Aorta (tissue), 5 donors: ENCODE measurements at regions of chr20 and their contacts with region 1.

Region 1: DNA sequence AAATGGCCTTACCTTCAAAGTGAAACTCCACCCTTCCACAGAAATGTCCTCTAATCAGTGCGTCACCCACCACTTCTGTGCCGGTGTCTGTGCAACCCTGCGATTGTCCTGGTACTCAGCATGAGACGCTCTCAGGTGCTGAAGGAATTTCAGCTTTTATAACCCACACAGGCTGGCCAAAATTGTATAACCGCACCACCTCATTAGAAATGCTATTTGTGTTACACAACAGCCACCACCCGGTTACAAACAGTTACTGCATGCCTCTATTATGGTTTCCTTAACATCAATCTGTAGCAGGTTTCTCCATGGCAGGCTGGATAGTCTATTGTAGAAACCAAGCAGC is 51.5 kb downstream of the SLC23A2 start:
- DNase-seq: no peak
- ATAC-seq: peak; percentile 76
- H3K4me3 ChIP-seq: no peak overlapping the region
- H3K27ac ChIP-seq: no peak overlapping the region
- H3K4me1 ChIP-seq: no peaks in the 10 kb centered on the region
- H3K27me3 ChIP-seq: no peaks in the 10 kb centered on the region

Region 2: DNA sequence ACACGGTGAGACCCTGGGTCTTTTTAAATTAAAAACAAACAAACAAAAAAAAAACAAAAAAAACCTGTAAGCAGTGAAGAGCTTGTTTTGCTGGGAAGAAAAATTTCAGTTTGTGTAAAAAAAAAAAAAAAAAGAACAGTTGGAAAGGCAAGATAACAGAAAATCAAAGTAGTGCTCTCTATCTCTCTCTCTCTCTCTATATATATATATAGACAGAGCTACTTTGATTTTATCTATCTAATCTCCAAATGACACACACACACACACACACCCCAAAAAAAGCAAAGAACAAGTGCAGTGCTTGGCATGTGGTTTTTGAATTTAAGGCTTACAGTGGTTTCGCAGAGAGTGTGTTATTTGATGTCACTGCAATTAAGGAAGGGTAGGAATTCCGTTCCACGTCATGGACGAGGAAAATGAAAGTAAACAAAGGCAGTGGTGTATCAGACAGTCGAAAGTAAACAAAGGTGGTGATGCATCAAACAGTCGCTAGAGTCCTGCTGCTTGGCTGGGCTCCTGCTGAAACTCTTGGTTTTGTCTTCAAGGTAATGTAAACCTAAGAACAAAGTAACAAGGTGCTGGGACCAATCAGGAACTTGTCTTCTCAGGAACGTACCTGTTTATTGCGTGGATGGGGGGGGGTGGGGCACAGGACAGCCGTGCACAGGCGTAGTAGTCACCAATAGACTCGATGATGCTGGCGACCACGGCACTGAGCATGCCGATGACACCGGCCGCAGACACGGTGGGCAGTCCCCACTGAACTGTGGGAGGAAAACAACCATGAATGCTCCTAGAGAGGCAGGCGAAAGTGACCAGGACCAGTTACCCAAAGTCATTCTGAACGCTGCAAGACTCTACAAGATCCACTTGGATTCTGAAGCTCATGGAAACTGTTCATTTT is 80.3 kb before region 1 on chr20:
- intact Hi-C with region 1: no loop called
- DNase-seq: no peak
- ATAC-seq: no peak
- H3K4me3 ChIP-seq: no peak overlapping the region
- H3K27ac ChIP-seq: no peak overlapping the region
- H3K4me1 ChIP-seq: no peaks in the 10 kb centered on the region
- H3K27me3 ChIP-seq: no peaks in the 10 kb centered on the region

Region 3: GRCh38 chr20:4916971-4917881 is 32.6 kb before region 1 on chr20:
- intact Hi-C with region 1: loop called in 1 of 2 experiments (anchors 5 kb)
- DNase-seq: no peak
- ATAC-seq: peak; percentile 73
- H3K4me3 ChIP-seq: no peak overlapping the region
- H3K27ac ChIP-seq: peak overlapping the region; percentile 16 to 73
- H3K4me1 ChIP-seq: peaks cover 0 to 7% of the 10 kb centered on the region in 2 donors
- H3K27me3 ChIP-seq: no peaks in the 10 kb centered on the region

Region 4: DNA sequence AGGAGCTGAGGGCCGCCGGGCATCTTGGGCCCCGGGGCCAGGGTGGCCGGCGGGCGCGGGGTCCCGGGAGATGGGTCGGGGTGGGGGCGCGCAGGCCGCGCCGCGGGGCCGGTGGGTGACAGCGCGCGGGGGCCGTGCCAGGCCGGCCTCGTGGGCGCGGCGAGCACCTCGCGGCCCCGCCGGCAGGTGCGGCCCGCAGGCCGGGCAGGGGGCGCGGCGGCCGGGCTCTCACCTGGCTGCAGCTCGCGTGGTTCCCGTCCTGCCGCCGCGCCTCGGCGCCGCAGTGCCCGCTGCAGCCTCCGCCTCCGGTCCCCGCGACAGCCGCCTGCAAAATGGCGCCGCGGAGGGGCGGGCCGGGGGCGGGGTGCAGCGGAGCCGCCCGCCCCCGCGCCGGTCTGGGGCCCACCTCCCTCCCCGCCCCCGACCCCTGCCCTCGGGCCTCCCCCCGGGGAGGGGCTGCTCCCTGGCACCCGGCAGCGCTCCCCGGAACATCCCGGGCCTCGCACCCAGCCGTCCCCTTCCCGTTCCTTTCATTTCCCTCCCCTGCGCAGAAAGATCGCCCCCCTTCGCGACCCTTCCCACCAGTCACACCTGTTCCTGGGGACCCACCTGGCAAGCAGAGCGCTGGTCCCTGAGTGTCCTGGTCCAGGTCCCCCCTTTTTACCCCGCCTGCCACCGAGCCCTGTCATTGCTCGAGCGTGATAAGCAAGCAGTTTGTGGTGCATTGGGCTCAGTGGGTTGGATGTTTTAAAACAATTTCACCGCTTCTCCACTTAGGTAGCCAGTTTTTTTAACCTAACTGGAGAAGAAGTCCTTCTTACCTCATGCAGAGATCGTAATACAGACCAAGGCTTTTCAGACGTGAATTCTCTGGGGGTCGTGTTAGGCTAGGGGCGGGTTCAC is 51.6 kb after region 1 on chr20 and contains the start of gene SLC23A2:
- intact Hi-C with region 1: no loop called
- DNase-seq: peak; percentile 53 to 82
- ATAC-seq: peak; percentile 74
- H3K4me3 ChIP-seq: peak within 1 kb of the TSS; percentile 85 to 94
- H3K27ac ChIP-seq: no peak within 1 kb of the TSS
- H3K4me1 ChIP-seq: peaks cover 0 to 2% of the 10 kb centered on the region in 2 donors
- H3K27me3 ChIP-seq: no peaks in the 10 kb centered on the region
- total RNA-seq, gene SLC23A2: 26.0 to 38.2 TPM